Activated naive CD4-positive, alpha-beta T cell treated with anti-CD3 and anti-CD28 coated beads for 36 hours (primary cell): ENCODE measurements at regions of chr10 and their contacts with region 1.

Region 1: GRCh38 chr10:102461187-102462054 is 10.1 kb upstream of the C10orf95 start:
- DNase-seq: peak; percentile 94
- H3K4me3 Mint-ChIP-seq: peak overlapping the region; percentile 88
- H3K27ac Mint-ChIP-seq: peak overlapping the region; percentile 73
- H3K4me1 Mint-ChIP-seq: peaks cover 23% of the 10 kb centered on the region
- H3K27me3 Mint-ChIP-seq: no peaks in the 10 kb centered on the region

Region 2: GRCh38 chr10:102450194-102450938 is 11.1 kb before region 1 on chr10:
- CTCF ChIA-PET with region 1: interaction called, 11 read pairs
- intact Hi-C with region 1: loop called (anchors 1 kb)
- DNase-seq: peak; percentile 82
- H3K4me3 Mint-ChIP-seq: peak overlapping the region; percentile 96
- H3K27ac Mint-ChIP-seq: peak overlapping the region; percentile 96
- H3K4me1 Mint-ChIP-seq: peaks cover 27% of the 10 kb centered on the region
- H3K27me3 Mint-ChIP-seq: no peaks in the 10 kb centered on the region